AG04449 (cell line): ENCODE measurements at regions of chr2 and their contacts with region 1.

Region 1: DNA sequence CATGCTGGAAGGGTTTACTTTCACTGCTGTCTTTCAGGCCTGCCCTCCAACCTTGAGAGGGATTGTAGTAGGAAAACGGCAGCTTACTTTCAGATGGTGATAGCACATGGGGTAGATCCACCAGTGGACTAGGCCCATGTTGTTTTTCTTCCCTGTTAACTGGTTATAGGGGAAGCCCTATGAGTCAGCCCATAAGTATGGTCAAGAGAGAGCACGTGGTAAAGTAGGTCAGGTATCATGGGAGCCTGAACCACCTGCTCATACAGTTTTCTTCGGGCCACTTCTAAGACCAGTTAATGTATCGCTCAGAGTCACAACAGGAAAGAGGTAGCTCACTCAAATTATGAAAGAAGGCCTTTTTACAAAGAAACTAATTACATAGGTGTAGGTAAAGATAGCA is 33.0 kb downstream of the PDK1 start:
- DNase-seq: no peak
- H3K4me3 ChIP-seq: no peak overlapping the region
- CTCF ChIP-seq: no peak

Region 2: DNA sequence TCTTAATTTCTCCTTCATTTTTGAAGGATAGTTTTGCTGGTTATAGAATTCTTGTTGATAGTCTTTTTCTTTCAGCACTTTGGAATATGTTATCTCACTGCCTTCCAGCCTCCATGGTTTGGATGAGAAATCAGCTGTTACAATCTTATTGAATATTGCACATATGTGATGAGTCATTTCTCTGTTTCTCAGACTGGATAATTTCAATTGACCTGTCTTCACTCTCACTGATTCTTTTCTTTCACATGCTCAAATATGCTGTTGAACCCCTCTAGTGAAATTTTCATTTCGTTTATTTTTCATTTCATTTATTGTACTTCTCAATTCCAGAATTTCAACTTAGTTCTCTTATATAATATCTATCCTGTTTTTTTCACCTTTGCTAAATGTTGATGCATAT is 10.9 kb before region 1 on chr2:
- CTCF ChIA-PET with region 1: interaction called, 30 read pairs
- POLR2A ChIA-PET with region 1: no interaction called
- DNase-seq: no peak
- H3K4me3 ChIP-seq: no peak overlapping the region
- CTCF ChIP-seq: no peak

Region 3: GRCh38 chr2:172613040-172613439 is 24.1 kb after region 1 on chr2:
- CTCF ChIA-PET with region 1: interaction called, 11 read pairs
- POLR2A ChIA-PET with region 1: no interaction called
- DNase-seq: no peak
- H3K4me3 ChIP-seq: no peak overlapping the region
- CTCF ChIP-seq: no peak

Region 4: GRCh38 chr2:172674034-172674967 is 85.4 kb after region 1 on chr2:
- CTCF ChIA-PET with region 1: interaction called, 47 read pairs
- POLR2A ChIA-PET with region 1: no interaction called
- DNase-seq: no peak
- H3K4me3 ChIP-seq: no peak overlapping the region
- CTCF ChIP-seq: peak; percentile 77